ENCODE measurements at regions of chr12 and their contacts with region 1.

Region 1: GRCh38 chr12:71780237-71780822 is 25.7 kb downstream of the RAB21 start:
- DNase-seq: peak in 1 of 2 donors; percentile 47
- ATAC-seq: peak in 5 of 8 donors; percentile 46 to 75 (median 61)
- H3K4me3 ChIP-seq: no peak overlapping the region
- H3K27ac ChIP-seq: peak overlapping the region in 3 of 10 donors; percentile 7 to 26 (median 15)
- H3K4me1 ChIP-seq: peaks cover 0 to 25% (median 11%) of the 10 kb centered on the region in 9 donors
- H3K27me3 ChIP-seq: no peaks in the 10 kb centered on the region
- CTCF ChIP-seq: peak; percentile 45 to 85 (median 72)

Region 2: DNA sequence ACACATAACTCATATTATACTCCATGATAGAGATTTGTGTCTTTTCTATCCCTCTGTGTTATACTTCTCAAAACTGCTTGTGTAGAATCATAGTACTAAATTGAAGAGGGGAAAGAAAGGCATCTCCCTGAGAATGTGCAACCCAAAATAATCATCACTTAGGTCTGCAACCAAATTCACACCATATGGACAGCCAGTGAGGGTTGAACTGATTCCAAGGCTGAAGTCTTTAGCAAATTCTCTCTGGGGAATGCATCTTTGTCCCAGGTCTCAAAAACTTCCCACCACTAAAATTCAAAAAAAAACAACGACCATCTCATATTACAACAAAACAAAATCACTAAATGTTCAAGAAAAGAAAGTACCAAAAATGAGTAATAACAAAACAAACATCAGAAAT is 127.7 kb before region 1 on chr12:
- intact Hi-C with region 1: no loop called
- DNase-seq: no peak
- ATAC-seq: no peak
- H3K4me3 ChIP-seq: no peak overlapping the region
- H3K27ac ChIP-seq: no peak overlapping the region
- H3K4me1 ChIP-seq: peaks cover 0 to 67% (median 27%) of the 10 kb centered on the region in 9 donors
- H3K27me3 ChIP-seq: no peaks in the 10 kb centered on the region
- CTCF ChIP-seq: no peak

Region 3: GRCh38 chr12:71840231-71840847 is 60.0 kb after region 1 on chr12:
- intact Hi-C with region 1: loop called in 7 of 10 experiments (anchors 5 to 10 kb)
- DNase-seq: peak in 1 of 2 donors; percentile 10
- ATAC-seq: peak in 6 of 8 donors; percentile 2 to 58 (median 41)
- H3K4me3 ChIP-seq: peak overlapping the region; percentile 63 to 80 (median 69)
- H3K27ac ChIP-seq: peak overlapping the region; percentile 89 to 96 (median 93)
- H3K4me1 ChIP-seq: peaks cover 0 to 58% (median 46%) of the 10 kb centered on the region in 9 donors
- H3K27me3 ChIP-seq: no peaks in the 10 kb centered on the region
- CTCF ChIP-seq: no peak

Region 4: DNA sequence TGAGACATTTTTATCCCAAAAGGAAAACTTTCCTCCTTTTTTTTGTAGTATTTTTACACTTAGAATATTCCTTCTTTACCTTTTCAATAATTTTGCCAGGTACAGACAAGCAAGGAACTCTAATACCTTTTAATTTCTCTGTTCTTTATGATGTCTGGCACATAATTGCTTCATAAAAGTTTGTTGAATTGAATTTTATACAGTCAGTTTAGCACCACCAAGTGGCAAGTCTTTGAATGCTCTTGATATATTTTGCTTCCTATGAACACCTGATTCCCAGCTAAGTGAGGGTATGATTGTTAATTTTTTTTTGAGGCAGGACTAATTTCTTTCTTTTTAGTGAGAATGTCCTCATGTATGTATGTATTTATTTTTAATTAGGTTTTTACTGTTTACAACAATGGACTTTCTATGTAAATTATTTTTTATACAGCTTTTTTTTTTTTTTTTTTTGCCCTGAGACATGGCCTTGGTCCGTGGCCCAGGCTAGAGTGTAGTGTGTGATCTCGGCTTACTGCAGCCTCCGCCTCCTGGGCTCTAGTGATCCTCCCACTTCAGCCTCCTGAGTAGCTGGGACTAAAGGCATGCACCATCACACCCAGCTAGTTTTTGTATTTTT is 66.1 kb after region 1 on chr12:
- intact Hi-C with region 1: loop called in 7 of 10 experiments (anchors 5 to 10 kb)
- DNase-seq: no peak
- ATAC-seq: no peak
- H3K4me3 ChIP-seq: no peak overlapping the region
- H3K27ac ChIP-seq: peak overlapping the region in 2 of 10 donors; percentile 23 to 38
- H3K4me1 ChIP-seq: peaks cover 0 to 87% (median 67%) of the 10 kb centered on the region in 9 donors
- H3K27me3 ChIP-seq: no peaks in the 10 kb centered on the region
- CTCF ChIP-seq: peak in 7 of 9 donors; percentile 23 to 68 (median 59)

Region 5: DNA sequence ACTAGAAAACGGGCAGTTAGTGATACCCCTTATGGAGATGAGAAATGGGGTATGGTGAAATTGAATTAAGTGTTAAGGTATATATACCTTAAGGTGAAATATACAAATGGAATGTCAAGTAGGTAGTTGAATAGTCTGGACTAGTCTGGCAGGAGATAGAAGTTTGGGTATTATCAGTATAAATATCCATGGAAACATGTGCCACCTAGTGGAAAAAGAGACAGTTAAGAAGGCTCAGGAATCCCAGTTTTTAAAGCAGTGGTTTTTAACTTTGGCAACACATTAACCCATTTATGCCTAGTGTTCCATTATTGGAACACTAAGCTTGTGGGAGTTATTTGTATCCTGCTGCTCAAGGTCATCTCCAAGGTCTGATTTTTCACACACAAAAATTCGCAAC is 119.8 kb after region 1 on chr12:
- intact Hi-C with region 1: loop called in 1 of 10 experiments (anchors 10 kb)
- DNase-seq: no peak
- ATAC-seq: no peak
- H3K4me3 ChIP-seq: no peak overlapping the region
- H3K27ac ChIP-seq: no peak overlapping the region
- H3K4me1 ChIP-seq: peaks cover 0 to 8% (median 0%) of the 10 kb centered on the region in 9 donors
- H3K27me3 ChIP-seq: no peaks in the 10 kb centered on the region
- CTCF ChIP-seq: peak in 4 of 9 donors; percentile 15 to 40 (median 18)

Region 6: GRCh38 chr12:71938728-71939385 is 158.5 kb after region 1 on chr12 and contains the start of gene TPH2:
- intact Hi-C with region 1: loop called in 1 of 10 experiments (anchors 10 kb)
- DNase-seq: peak; percentile 24 to 36
- ATAC-seq: peak in 3 of 8 donors; percentile 19 to 57 (median 42)
- H3K4me3 ChIP-seq: no peak within 1 kb of the TSS
- H3K27ac ChIP-seq: no peak within 1 kb of the TSS
- H3K4me1 ChIP-seq: no peaks in the 10 kb centered on the region
- H3K27me3 ChIP-seq: peaks cover 0 to 69% (median 37%) of the 10 kb centered on the region in 7 donors
- CTCF ChIP-seq: peak; percentile 8 to 62 (median 53)
- total RNA-seq, gene TPH2: not detected